Aorta (tissue), 5 donors: ENCODE measurements at regions of chrX and their contacts with region 1.

Region 1: GRCh38 chrX:17590892-17591740 is 146.2 kb upstream of the SCML1 start:
- DNase-seq: peak; percentile 67 to 79
- ATAC-seq: peak; percentile 83
- H3K4me3 ChIP-seq: peak overlapping the region; percentile 5 to 26
- H3K27ac ChIP-seq: peak overlapping the region; percentile 22 to 71
- H3K4me1 ChIP-seq: peaks cover 0 to 4% of the 10 kb centered on the region in 2 donors
- H3K27me3 ChIP-seq: no peaks in the 10 kb centered on the region

Region 2: DNA sequence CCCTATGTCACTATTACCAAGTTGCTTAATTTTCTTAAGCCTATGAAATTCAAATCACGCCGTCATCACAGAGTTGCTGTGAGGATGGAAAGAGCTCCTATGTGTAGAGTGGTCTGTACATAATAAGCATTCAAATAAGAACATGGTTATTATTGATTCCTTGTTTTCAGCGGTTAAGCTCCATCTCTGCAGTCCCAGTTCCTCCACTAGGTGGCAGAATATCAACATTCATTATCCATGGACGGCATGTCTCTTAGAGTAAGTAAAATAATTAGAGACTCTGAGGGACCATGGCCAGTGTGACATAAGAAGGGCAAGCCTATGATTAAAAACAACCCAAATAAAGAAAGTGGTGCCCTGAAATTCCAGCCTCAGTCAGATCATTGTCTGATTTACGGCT is 348.6 kb before region 1 on chrX:
- intact Hi-C with region 1: loop called in 1 of 2 experiments (anchors 10 kb)
- DNase-seq: no peak
- ATAC-seq: peak; percentile 75
- H3K4me3 ChIP-seq: no peak overlapping the region
- H3K27ac ChIP-seq: no peak overlapping the region
- H3K4me1 ChIP-seq: no peaks in the 10 kb centered on the region
- H3K27me3 ChIP-seq: no peaks in the 10 kb centered on the region

Region 3: GRCh38 chrX:17374619-17375366 is 216.3 kb before region 1 on chrX and contains the start of gene NHS:
- intact Hi-C with region 1: loop called (anchors 2 to 5 kb)
- DNase-seq: peak; percentile 81 to 90
- ATAC-seq: peak; percentile 86
- H3K4me3 ChIP-seq: peak within 1 kb of the TSS; percentile 56 to 66
- H3K27ac ChIP-seq: peak within 1 kb of the TSS in 1 of 2 donors; percentile 63
- H3K4me1 ChIP-seq: no peaks in the 10 kb centered on the region
- H3K27me3 ChIP-seq: no peaks in the 10 kb centered on the region
- total RNA-seq, gene NHS: 19.1 to 28.2 TPM

Region 4: GRCh38 chrX:17535229-17535628 is 55.9 kb before region 1 on chrX:
- intact Hi-C with region 1: no loop called
- DNase-seq: no peak
- ATAC-seq: no peak
- H3K4me3 ChIP-seq: no peak overlapping the region
- H3K27ac ChIP-seq: no peak overlapping the region
- H3K4me1 ChIP-seq: no peaks in the 10 kb centered on the region
- H3K27me3 ChIP-seq: no peaks in the 10 kb centered on the region

Region 5: DNA sequence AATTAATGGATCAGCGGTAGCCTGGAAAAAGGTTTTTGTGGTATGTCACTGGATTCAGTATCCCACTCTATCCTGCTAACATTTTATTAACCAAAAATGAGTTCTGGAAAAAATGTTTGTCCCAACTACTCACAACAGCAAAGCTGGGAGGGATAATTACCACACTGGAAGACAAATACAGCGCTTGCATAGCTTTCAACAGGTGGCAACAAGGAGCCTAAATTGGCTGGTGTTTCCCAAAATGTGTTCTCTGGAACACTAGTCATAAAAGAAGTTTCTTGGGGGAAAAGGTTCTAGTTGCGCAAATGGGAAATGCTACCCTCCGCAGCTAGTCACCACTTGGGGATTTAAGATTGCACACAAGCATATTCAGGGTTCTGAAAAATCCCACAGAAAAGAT is 575.0 kb after region 1 on chrX:
- intact Hi-C with region 1: no loop called
- DNase-seq: no peak
- ATAC-seq: no peak
- H3K4me3 ChIP-seq: no peak overlapping the region
- H3K27ac ChIP-seq: no peak overlapping the region
- H3K4me1 ChIP-seq: no peaks in the 10 kb centered on the region
- H3K27me3 ChIP-seq: no peaks in the 10 kb centered on the region